Naive thymus-derived CD4-positive, alpha-beta T cell (primary cell): ENCODE measurements at regions of chr18 and their contacts with region 1.

Region 1: DNA sequence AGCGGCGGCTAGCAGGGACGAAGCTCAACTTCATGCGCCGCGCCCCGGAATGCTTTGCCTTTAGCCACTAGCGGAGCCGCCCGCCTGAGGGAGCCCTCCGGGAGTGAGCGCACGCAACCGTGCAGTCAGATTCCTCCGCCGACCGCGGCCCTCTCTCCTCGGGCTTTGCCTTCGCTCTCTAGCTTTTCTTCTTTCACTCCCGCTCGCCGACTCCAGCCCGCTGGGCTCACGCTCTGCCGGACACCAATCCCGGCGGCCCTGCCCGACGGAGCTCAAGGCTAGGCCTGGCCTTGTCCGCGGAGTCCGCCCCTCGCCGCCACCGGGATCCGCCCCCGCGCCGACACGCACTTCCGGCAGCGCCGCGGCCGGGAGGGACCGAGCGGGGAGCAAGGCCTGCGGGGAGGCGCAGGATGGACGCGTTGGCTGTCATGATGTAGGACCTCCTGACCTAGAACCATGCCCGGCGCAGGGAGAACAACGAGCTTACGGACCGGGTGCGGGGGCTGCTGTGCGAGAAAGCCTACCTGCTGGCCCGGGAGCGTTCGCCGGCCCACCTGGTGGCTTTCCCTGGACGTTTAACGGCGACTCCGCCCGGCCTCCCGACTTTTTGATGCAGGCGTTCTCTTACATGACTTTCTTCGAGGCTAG is 40.8 kb upstream of the AKAIN1 start:
- DNase-seq: peak; percentile 81 to 97 (median 92)
- ATAC-seq: peak; percentile 93
- H3K4me3 ChIP-seq: peak overlapping the region; percentile 89
- H3K4me3 Mint-ChIP-seq: peak overlapping the region; percentile 93 to 98 (median 96)
- H3K27ac ChIP-seq: peak overlapping the region; percentile 90
- H3K27ac Mint-ChIP-seq: peak overlapping the region; percentile 97 to 99 (median 98)
- H3K4me1 ChIP-seq: peaks cover 13 to 16% of the 10 kb centered on the region in 2 donors
- H3K4me1 Mint-ChIP-seq: peaks cover 16 to 76% (median 45%) of the 10 kb centered on the region in 7 donors
- H3K27me3 ChIP-seq: no peaks in the 10 kb centered on the region
- H3K27me3 Mint-ChIP-seq: peaks cover 0 to 7% (median 0%) of the 10 kb centered on the region in 5 donors

Region 2: DNA sequence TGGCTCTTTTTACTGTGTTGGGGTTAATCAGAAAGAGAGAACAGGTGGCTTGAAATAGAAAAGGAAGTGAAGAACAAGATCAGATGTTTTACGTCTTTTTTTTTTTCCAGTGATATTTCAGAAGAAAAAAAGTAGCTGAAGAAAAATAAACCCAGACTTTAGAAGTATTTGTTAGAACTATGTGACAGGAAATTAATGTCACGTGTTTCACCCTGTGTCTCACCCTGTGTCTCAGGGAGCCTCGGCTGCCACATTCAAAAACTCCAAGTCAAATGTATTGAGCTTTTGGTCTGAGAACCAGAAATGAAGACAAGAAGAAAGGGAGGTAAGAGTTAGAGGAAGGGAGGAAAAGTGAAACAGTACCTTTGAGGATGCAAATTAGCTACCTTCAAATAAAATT is 78.8 kb before region 1 on chr18:
- CTCF ChIA-PET with region 1: interaction called, 6 read pairs
- POLR2A ChIA-PET with region 1: interaction called, 56 read pairs
- intact Hi-C with region 1: loop called in 1 of 2 experiments (anchors 1 kb)
- DNase-seq: peak in 7 of 9 donors; percentile 63 to 81 (median 76)
- ATAC-seq: peak; percentile 89
- H3K4me3 ChIP-seq: no peak overlapping the region
- H3K4me3 Mint-ChIP-seq: peak overlapping the region; percentile 11 to 92 (median 73)
- H3K27ac ChIP-seq: peak overlapping the region; percentile 53
- H3K27ac Mint-ChIP-seq: peak overlapping the region; percentile 43 to 97 (median 93)
- H3K4me1 ChIP-seq: peaks cover 0 to 45% of the 10 kb centered on the region in 2 donors
- H3K4me1 Mint-ChIP-seq: peaks cover 4 to 76% (median 61%) of the 10 kb centered on the region in 7 donors
- H3K27me3 ChIP-seq: no peaks in the 10 kb centered on the region
- H3K27me3 Mint-ChIP-seq: peaks cover 0 to 4% (median 0%) of the 10 kb centered on the region in 5 donors

Region 3: DNA sequence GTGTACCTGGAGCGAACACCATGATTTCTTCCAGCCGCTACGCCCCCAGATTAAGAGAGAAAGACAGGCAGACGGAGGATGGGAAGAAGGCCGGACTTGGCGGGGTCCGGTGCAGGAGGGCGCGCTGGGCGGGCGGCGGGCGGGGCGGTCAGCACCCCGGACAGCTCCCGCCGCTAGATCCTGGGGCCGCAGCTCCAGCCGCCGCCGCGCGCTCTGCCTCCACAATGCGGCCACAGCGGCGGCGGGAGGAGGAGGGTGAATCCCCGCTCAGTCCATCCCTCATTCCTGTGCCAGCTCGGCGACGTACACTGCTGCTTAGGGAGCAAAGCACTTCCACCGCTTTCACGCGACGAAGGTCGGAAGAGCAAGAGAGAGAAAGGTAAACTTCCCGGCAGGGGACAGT is 40.8 kb before region 1 on chr18 and contains the start of gene AKAIN1:
- CTCF ChIA-PET with region 1: no interaction called
- POLR2A ChIA-PET with region 1: no interaction called
- intact Hi-C with region 1: loop called in 1 of 2 experiments (anchors 2 kb)
- DNase-seq: peak in 7 of 9 donors; percentile 2 to 38 (median 25)
- ATAC-seq: peak; percentile 72
- H3K4me3 ChIP-seq: no peak within 1 kb of the TSS
- H3K4me3 Mint-ChIP-seq: peak within 1 kb of the TSS in 9 of 10 donors; percentile 65 to 83 (median 74)
- H3K27ac ChIP-seq: no peak within 1 kb of the TSS
- H3K27ac Mint-ChIP-seq: peak within 1 kb of the TSS in 1 of 9 donors; percentile 46
- H3K4me1 ChIP-seq: peaks cover 0 to 6% of the 10 kb centered on the region in 2 donors
- H3K4me1 Mint-ChIP-seq: peaks cover 0 to 26% (median 19%) of the 10 kb centered on the region in 7 donors
- H3K27me3 ChIP-seq: peaks cover 5 to 17% of the 10 kb centered on the region in 2 donors
- H3K27me3 Mint-ChIP-seq: peaks cover 45 to 64% (median 54%) of the 10 kb centered on the region in 5 donors
- total RNA-seq, gene AKAIN1: not detected

Region 4: GRCh38 chr18:5250603-5251002 is 12.8 kb after region 1 on chr18:
- CTCF ChIA-PET with region 1: interaction called, 5 read pairs
- POLR2A ChIA-PET with region 1: interaction called, 11 read pairs
- intact Hi-C with region 1: no loop called
- DNase-seq: no peak
- ATAC-seq: no peak
- H3K4me3 ChIP-seq: no peak overlapping the region
- H3K4me3 Mint-ChIP-seq: no peak overlapping the region
- H3K27ac ChIP-seq: no peak overlapping the region
- H3K27ac Mint-ChIP-seq: no peak overlapping the region
- H3K4me1 ChIP-seq: no peaks in the 10 kb centered on the region
- H3K4me1 Mint-ChIP-seq: peaks cover 0 to 8% (median 3%) of the 10 kb centered on the region in 7 donors
- H3K27me3 ChIP-seq: no peaks in the 10 kb centered on the region
- H3K27me3 Mint-ChIP-seq: peaks cover 0 to 10% (median 2%) of the 10 kb centered on the region in 5 donors

Region 5: DNA sequence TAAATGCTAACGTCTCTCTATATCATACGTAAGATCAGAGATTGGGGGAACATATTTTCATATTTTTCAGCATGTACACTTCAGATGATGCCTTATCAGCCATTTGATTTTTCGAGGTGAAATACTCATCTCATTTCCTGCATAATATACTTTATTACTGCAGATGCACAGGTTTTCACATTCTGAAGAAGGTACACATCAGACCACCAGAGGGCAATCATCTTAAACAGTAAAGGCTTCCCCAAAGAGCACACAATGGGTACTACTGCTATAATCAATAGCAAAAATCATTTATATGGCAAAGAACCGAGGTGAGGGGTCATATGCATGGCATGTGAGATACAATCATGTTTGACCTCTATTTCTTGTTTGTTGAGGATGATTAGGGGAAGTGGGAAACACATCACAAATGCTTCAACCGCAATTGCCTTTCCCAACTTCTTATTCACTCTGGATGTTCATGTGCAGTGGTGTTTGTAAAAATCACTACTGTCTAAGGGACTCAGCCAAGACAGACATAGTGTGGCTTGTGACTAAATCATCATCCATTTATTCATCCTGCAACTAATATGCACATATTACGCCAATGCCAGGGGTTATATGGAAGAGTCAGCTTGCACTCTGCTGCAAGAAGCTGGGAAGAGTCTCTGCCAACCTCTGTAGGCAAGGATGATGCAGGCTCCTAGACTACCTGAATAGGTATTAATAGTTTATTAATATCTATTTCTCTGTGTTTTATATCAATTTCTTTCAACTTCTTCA is 187.2 kb after region 1 on chr18:
- CTCF ChIA-PET with region 1: no interaction called
- POLR2A ChIA-PET with region 1: no interaction called
- intact Hi-C with region 1: loop called in 1 of 2 experiments (anchors 5 kb)
- DNase-seq: peak in 6 of 9 donors; percentile 18 to 45 (median 34)
- ATAC-seq: peak; percentile 76
- H3K4me3 ChIP-seq: no peak overlapping the region
- H3K4me3 Mint-ChIP-seq: no peak overlapping the region
- H3K27ac ChIP-seq: no peak overlapping the region
- H3K27ac Mint-ChIP-seq: no peak overlapping the region
- H3K4me1 ChIP-seq: no peaks in the 10 kb centered on the region
- H3K4me1 Mint-ChIP-seq: peaks cover 0 to 11% (median 3%) of the 10 kb centered on the region in 7 donors
- H3K27me3 ChIP-seq: no peaks in the 10 kb centered on the region
- H3K27me3 Mint-ChIP-seq: peaks cover 0 to 12% (median 4%) of the 10 kb centered on the region in 5 donors

Region 6: DNA sequence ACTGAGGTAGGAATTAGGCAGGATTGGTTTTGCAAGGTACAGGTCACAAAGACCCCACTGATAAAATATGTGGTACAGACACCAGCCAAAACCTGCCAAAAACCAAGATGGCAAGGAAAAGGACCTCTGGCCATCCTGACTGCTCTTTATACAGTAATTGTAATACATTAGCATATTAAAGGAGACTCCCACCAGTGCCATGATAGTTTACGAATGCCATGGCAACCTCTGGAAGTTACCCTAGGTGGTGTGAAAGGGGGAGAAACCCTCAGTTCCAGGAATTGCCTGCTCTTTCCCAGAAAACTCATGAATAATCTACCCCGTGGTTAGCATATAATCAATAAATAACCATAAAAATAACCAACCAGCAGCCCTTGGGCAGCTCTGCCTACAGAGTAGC is 435.7 kb after region 1 on chr18:
- CTCF ChIA-PET with region 1: no interaction called
- POLR2A ChIA-PET with region 1: no interaction called
- intact Hi-C with region 1: no loop called
- DNase-seq: no peak
- ATAC-seq: no peak
- H3K4me3 ChIP-seq: no peak overlapping the region
- H3K4me3 Mint-ChIP-seq: no peak overlapping the region
- H3K27ac ChIP-seq: no peak overlapping the region
- H3K27ac Mint-ChIP-seq: no peak overlapping the region
- H3K4me1 ChIP-seq: no peaks in the 10 kb centered on the region
- H3K4me1 Mint-ChIP-seq: no peaks in the 10 kb centered on the region
- H3K27me3 ChIP-seq: no peaks in the 10 kb centered on the region
- H3K27me3 Mint-ChIP-seq: peaks cover 0 to 14% (median 7%) of the 10 kb centered on the region in 5 donors